ENCODE measurements at regions of chr2 and their contacts with region 1.

Region 1: GRCh38 chr2:148455796-148456195 is 188.8 kb upstream of the EPC2 start:
- DNase-seq: peak; percentile 4
- ATAC-seq: no peak
- H3K4me3 ChIP-seq: no peak overlapping the region
- H3K27ac ChIP-seq: no peak overlapping the region
- H3K4me1 ChIP-seq: no peaks in the 10 kb centered on the region
- H3K27me3 ChIP-seq: no peaks in the 10 kb centered on the region
- CTCF ChIP-seq: no peak
- POLR2A ChIP-seq: no peak
- RAD21 ChIP-seq: no peak

Region 2: GRCh38 chr2:146992057-146992456 is 1463.7 kb before region 1 on chr2:
- CTCF ChIA-PET with region 1: no interaction called
- POLR2A ChIA-PET with region 1: interaction called, 15 read pairs
- dilution Hi-C with region 1: no loop called
- in situ Hi-C with region 1: no loop called
- intact Hi-C with region 1: no loop called
- DNase-seq: peak; percentile 12
- ATAC-seq: peak; percentile 32
- H3K4me3 ChIP-seq: no peak overlapping the region
- H3K27ac ChIP-seq: no peak overlapping the region
- H3K4me1 ChIP-seq: peaks cover 2% of the 10 kb centered on the region; the same call in 1 of the 2 replicates
- H3K27me3 ChIP-seq: no peaks in the 10 kb centered on the region
- CTCF ChIP-seq: no peak
- POLR2A ChIP-seq: no peak
- RAD21 ChIP-seq: no peak

Measured in IMR-90 (cell line).